CD4-positive, alpha-beta T cell (primary cell): ENCODE measurements at regions of chr10 and their contacts with region 1.

Region 1: GRCh38 chr10:128011175-128011979 is 104.5 kb downstream of the PTPRE start:
- DNase-seq: peak; percentile 76 to 94 (median 86)
- ATAC-seq: peak; percentile 99
- H3K4me3 ChIP-seq: no peak overlapping the region
- H3K4me3 Mint-ChIP-seq: peak overlapping the region; percentile 28
- H3K27ac ChIP-seq: no peak overlapping the region
- H3K27ac Mint-ChIP-seq: no peak overlapping the region
- H3K4me1 ChIP-seq: peaks cover 9% of the 10 kb centered on the region
- H3K4me1 Mint-ChIP-seq: peaks cover 9% of the 10 kb centered on the region
- H3K27me3 ChIP-seq: no peaks in the 10 kb centered on the region
- H3K27me3 Mint-ChIP-seq: peaks cover 4% of the 10 kb centered on the region
- CTCF ChIP-seq: peak; percentile 99

Region 2: GRCh38 chr10:127715782-127716378 is 295.5 kb before region 1 on chr10:
- CTCF ChIA-PET with region 1: no interaction called
- POLR2A ChIA-PET with region 1: no interaction called
- intact Hi-C with region 1: loop called in 1 of 2 experiments (anchors 10 kb)
- DNase-seq: peak in 2 of 14 experiments; percentile 19 to 24
- ATAC-seq: no peak
- H3K4me3 ChIP-seq: no peak overlapping the region
- H3K4me3 Mint-ChIP-seq: no peak overlapping the region
- H3K27ac ChIP-seq: no peak overlapping the region
- H3K27ac Mint-ChIP-seq: no peak overlapping the region
- H3K4me1 ChIP-seq: no peaks in the 10 kb centered on the region
- H3K4me1 Mint-ChIP-seq: no peaks in the 10 kb centered on the region
- H3K27me3 ChIP-seq: peaks cover 2 to 4% of the 10 kb centered on the region in 2 experiments
- H3K27me3 Mint-ChIP-seq: peaks cover 7% of the 10 kb centered on the region
- CTCF ChIP-seq: peak; percentile 34

Region 3: DNA sequence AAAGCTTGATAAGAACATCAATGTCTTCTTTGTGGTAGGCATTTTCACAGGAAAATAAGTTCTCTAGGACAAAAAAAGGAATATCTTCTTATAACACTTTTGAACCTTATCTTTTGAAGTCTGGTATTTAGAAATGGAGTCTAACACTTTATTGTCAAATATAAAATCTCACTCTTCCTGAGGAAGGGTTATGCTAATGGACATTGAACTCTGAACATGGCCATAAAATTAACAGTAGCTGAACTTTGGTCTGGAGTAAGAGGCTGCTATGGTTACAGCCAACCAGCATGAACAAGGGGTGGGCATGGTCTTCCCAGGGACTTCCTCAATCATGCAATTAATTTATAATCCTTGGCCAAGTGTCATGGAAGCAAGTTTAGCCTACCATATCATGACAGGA is 118.6 kb before region 1 on chr10 and contains the start of gene CLRN3:
- CTCF ChIA-PET with region 1: no interaction called
- POLR2A ChIA-PET with region 1: no interaction called
- intact Hi-C with region 1: no loop called
- DNase-seq: no peak
- ATAC-seq: no peak
- H3K4me3 ChIP-seq: no peak within 1 kb of the TSS
- H3K4me3 Mint-ChIP-seq: no peak within 1 kb of the TSS
- H3K27ac ChIP-seq: no peak within 1 kb of the TSS
- H3K27ac Mint-ChIP-seq: no peak within 1 kb of the TSS
- H3K4me1 ChIP-seq: no peaks in the 10 kb centered on the region
- H3K4me1 Mint-ChIP-seq: no peaks in the 10 kb centered on the region
- H3K27me3 ChIP-seq: no peaks in the 10 kb centered on the region
- H3K27me3 Mint-ChIP-seq: peaks cover 4% of the 10 kb centered on the region
- CTCF ChIP-seq: no peak
- total RNA-seq, gene CLRN3: not detected

Region 4: DNA sequence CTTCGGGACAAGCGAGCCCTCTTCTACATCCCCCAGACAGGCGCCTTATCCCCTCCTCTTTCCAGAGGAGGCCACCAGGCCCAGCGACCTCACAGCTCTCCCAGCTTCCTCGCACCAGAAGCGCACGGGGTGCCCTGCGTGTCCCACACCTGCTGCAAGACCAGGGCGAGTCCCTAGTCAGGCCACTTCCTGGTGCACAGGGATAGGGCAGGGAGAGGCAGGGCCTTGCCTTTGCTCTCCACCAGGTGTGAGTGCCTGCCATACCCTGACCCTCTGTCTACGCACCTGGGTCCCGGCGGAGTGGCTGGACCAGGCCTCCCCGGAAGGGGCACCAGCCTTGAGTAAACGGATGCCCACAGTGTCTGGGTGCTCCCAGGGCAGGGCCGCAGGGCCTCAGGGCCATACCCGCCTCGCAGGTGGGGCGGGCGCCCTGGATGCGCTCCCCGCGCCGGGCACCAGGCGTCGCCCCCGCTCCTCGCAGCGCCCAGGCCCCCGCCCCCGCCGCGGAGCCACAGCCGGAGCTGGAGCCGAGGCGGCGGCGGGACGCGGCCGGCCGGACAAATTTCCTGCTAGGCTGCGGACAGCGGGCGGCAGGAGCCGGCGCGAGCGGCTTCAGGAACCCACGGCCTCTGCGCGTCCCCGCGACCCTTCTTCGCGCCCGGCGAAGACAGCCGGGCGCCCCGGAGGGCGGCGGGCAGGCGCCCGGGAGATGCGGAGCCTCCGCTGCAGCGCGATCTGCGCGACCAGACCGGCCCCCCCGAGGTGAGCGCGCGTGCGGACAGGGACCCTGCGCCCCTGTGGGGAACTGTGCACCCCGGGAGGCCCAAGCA is 104.6 kb before region 1 on chr10 and contains the start of gene PTPRE:
- CTCF ChIA-PET with region 1: interaction called, 25 read pairs
- POLR2A ChIA-PET with region 1: interaction called, 4 read pairs
- intact Hi-C with region 1: loop called (anchors 1 kb)
- DNase-seq: peak; percentile 24 to 83 (median 57)
- ATAC-seq: peak; percentile 98
- H3K4me3 ChIP-seq: peak within 1 kb of the TSS; percentile 16
- H3K4me3 Mint-ChIP-seq: peak within 1 kb of the TSS; percentile 61
- H3K27ac ChIP-seq: no peak within 1 kb of the TSS
- H3K27ac Mint-ChIP-seq: no peak within 1 kb of the TSS
- H3K4me1 ChIP-seq: peaks cover 6% of the 10 kb centered on the region
- H3K4me1 Mint-ChIP-seq: no peaks in the 10 kb centered on the region
- H3K27me3 ChIP-seq: peaks cover 7 to 16% of the 10 kb centered on the region in 2 experiments
- H3K27me3 Mint-ChIP-seq: peaks cover 36% of the 10 kb centered on the region
- CTCF ChIP-seq: no peak
- total RNA-seq, gene PTPRE: 47.6 to 55.1 TPM

Region 5: GRCh38 chr10:128035557-128035973 is 24.2 kb after region 1 on chr10:
- CTCF ChIA-PET with region 1: interaction called, 16 read pairs
- POLR2A ChIA-PET with region 1: no interaction called
- intact Hi-C with region 1: no loop called
- DNase-seq: peak; percentile 41 to 81 (median 56)
- ATAC-seq: peak; percentile 73
- H3K4me3 ChIP-seq: no peak overlapping the region
- H3K4me3 Mint-ChIP-seq: no peak overlapping the region
- H3K27ac ChIP-seq: no peak overlapping the region
- H3K27ac Mint-ChIP-seq: no peak overlapping the region
- H3K4me1 ChIP-seq: peaks cover 5% of the 10 kb centered on the region
- H3K4me1 Mint-ChIP-seq: peaks cover 3% of the 10 kb centered on the region
- H3K27me3 ChIP-seq: no peaks in the 10 kb centered on the region
- H3K27me3 Mint-ChIP-seq: no peaks in the 10 kb centered on the region
- CTCF ChIP-seq: peak; percentile 78

Region 6: GRCh38 chr10:128064108-128064969 is 53.0 kb after region 1 on chr10:
- CTCF ChIA-PET with region 1: interaction called, 15 read pairs
- POLR2A ChIA-PET with region 1: interaction called, 10 read pairs
- intact Hi-C with region 1: loop called (anchors 1 kb)
- DNase-seq: peak in 13 of 14 experiments; percentile 37 to 87 (median 59)
- ATAC-seq: peak; percentile 72
- H3K4me3 ChIP-seq: peak overlapping the region; percentile 47
- H3K4me3 Mint-ChIP-seq: peak overlapping the region; percentile 42
- H3K27ac ChIP-seq: peak overlapping the region; percentile 56 to 90
- H3K27ac Mint-ChIP-seq: peak overlapping the region; percentile 84
- H3K4me1 ChIP-seq: peaks cover 70% of the 10 kb centered on the region
- H3K4me1 Mint-ChIP-seq: peaks cover 72% of the 10 kb centered on the region
- H3K27me3 ChIP-seq: no peaks in the 10 kb centered on the region
- H3K27me3 Mint-ChIP-seq: no peaks in the 10 kb centered on the region
- CTCF ChIP-seq: no peak

Region 7: GRCh38 chr10:128069351-128070051 is 58.1 kb after region 1 on chr10:
- CTCF ChIA-PET with region 1: interaction called, 15 read pairs
- POLR2A ChIA-PET with region 1: interaction called, 10 read pairs
- intact Hi-C with region 1: loop called (anchors 1 kb)
- DNase-seq: peak; percentile 70 to 92 (median 78)
- ATAC-seq: peak; percentile 55
- H3K4me3 ChIP-seq: no peak overlapping the region
- H3K4me3 Mint-ChIP-seq: no peak overlapping the region
- H3K27ac ChIP-seq: no peak overlapping the region
- H3K27ac Mint-ChIP-seq: peak overlapping the region; percentile 59
- H3K4me1 ChIP-seq: peaks cover 44% of the 10 kb centered on the region
- H3K4me1 Mint-ChIP-seq: peaks cover 48% of the 10 kb centered on the region
- H3K27me3 ChIP-seq: no peaks in the 10 kb centered on the region
- H3K27me3 Mint-ChIP-seq: no peaks in the 10 kb centered on the region
- CTCF ChIP-seq: peak; percentile 90

Region 8: DNA sequence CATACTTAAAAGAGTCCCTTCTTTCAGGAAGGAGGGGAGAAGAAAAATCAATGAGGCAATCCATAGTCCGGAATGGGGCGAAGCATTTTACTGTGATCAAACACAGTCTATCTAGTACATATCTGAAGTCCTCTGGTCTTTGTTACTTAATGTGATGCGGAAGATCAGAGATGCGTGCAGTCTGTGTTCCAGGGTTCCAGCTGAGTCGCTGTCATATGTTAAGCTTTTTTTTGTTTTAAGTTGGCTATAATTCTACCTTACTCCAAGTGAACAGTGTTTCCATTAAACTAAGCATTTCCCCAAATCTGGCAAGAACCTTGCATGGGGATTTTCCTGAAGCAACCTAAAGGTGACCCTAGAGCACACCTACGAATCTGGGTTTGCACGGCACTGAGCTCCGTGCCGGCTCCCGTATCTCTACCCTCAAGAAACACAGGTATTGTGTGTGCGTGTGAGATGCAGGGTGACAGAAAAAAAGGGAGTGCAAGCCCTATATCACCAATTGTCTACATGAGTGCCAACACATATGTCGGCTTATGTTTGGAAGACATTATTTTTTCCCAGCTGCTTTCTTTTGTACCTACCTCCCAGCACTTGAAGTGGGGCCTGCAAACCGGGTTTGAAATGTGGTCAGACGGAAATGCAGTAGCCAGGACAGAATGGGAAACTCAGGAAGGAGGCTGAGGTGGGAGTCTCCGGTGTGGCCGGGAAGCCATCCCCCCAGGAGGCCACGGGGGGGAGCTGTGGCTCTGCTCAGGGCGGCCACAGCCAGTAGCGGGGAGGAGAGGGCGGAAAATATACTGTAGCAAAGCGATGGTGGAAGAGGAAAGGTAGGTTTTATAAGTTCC is 1019.8 kb after region 1 on chr10:
- CTCF ChIA-PET with region 1: no interaction called
- POLR2A ChIA-PET with region 1: no interaction called
- intact Hi-C with region 1: no loop called
- DNase-seq: peak in 13 of 14 experiments; percentile 20 to 76 (median 42)
- ATAC-seq: peak; percentile 45
- H3K4me3 ChIP-seq: no peak overlapping the region
- H3K4me3 Mint-ChIP-seq: no peak overlapping the region
- H3K27ac ChIP-seq: no peak overlapping the region
- H3K27ac Mint-ChIP-seq: no peak overlapping the region
- H3K4me1 ChIP-seq: peaks cover 11% of the 10 kb centered on the region
- H3K4me1 Mint-ChIP-seq: peaks cover 37% of the 10 kb centered on the region
- H3K27me3 ChIP-seq: no peaks in the 10 kb centered on the region
- H3K27me3 Mint-ChIP-seq: peaks cover 28% of the 10 kb centered on the region
- CTCF ChIP-seq: peak; percentile 82